Calu3 (cell line): ENCODE measurements at regions of chr2 and their contacts with region 1.

Region 1: GRCh38 chr2:223909001-223909741 is 36.0 kb downstream of the WDFY1 start:
- DNase-seq: no peak
- H3K4me3 Mint-ChIP-seq: no peak overlapping the region
- H3K27ac Mint-ChIP-seq: no peak overlapping the region
- H3K4me1 Mint-ChIP-seq: peaks cover 23% of the 10 kb centered on the region
- H3K27me3 Mint-ChIP-seq: no peaks in the 10 kb centered on the region
- CTCF ChIP-seq: no peak

Region 2: DNA sequence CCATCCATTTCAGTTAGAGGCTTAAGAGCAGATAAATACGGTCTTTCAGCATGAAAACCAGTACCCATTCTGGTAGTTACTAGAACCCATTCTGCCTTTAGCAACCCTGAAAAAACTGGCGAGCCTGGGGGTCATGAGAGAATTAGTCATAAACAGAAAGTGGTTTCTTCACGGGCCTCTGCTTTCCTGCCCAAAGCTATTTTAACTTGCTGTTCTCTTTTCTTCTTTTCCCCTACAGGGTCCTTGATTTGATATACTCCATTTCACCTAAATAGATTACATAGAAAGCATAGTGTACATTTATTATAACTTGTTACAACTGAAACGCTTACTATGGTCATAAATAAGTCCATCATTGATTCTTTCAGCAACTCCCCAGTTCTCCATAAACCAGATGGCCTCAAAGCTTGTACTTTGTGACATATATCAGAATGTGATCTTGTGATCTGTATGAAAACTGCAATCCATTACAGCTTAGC is 12.3 kb before region 1 on chr2:
- CTCF ChIA-PET with region 1: no interaction called
- intact Hi-C with region 1: loop called (anchors 1 kb)
- DNase-seq: no peak
- H3K4me3 Mint-ChIP-seq: no peak overlapping the region
- H3K27ac Mint-ChIP-seq: no peak overlapping the region
- H3K4me1 Mint-ChIP-seq: peaks cover 22% of the 10 kb centered on the region
- H3K27me3 Mint-ChIP-seq: no peaks in the 10 kb centered on the region
- CTCF ChIP-seq: no peak

Region 3: DNA sequence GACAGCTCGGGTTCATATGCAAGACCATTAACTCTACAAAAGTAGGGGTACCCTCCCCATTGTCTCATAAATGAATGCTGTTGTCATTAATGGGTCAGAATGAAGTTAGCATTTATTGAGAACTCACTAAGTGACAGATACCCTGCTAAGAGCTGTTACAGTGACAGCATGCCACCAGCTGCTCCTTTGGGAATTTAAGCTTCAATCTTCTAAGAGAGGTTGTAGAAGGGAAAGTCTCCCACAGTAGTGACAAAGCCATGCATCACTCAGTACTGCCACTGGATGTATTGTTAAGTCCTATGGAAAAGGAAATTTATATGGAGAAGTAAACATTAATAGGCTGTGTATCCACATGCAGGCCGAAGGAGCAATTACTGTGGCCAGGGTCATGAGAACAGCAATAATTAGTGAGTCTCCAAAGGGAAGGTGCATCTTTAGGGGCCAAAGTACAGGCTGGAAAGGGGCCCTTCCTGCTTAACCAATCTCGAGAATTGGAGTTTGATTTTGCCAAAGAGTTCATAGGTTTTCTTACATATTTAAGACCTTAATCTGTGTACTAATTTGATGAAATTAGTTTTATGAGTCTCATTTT is 557.2 kb after region 1 on chr2:
- CTCF ChIA-PET with region 1: no interaction called
- intact Hi-C with region 1: no loop called
- DNase-seq: no peak
- H3K4me3 Mint-ChIP-seq: no peak overlapping the region
- H3K27ac Mint-ChIP-seq: no peak overlapping the region
- H3K4me1 Mint-ChIP-seq: no peaks in the 10 kb centered on the region
- H3K27me3 Mint-ChIP-seq: no peaks in the 10 kb centered on the region
- CTCF ChIP-seq: no peak